Activated CD4-positive, alpha-beta T cell treated with anti-CD3 and anti-CD28 coated beads, Interleukin-2, amount 10 ng/mL, durations not matched to agents 24 days and 14 days (primary cell): ENCODE measurements at regions of chr3 and their contacts with region 1.

Region 1: DNA sequence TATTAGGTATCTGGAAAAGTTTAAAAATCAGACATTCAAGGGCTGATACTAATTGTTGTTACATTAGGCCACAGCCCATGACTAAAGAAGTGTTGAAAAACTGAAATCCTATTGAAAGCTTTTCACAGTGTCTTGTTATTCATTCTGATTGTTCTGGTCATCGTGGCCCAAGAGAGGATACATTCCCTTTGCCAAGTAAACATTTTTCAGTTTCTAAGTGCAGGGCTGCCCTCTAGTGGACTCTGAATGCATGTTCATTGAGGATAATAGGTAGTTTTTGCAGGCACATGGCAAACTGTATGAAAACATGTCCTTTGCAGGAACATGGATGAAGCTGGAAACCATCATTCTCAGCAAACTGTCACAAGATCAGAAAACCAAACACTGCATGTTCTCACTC is 181.1 kb downstream of the MYRIP start:
- DNase-seq: peak; percentile 70
- H3K4me3 Mint-ChIP-seq: no peak overlapping the region
- H3K27ac Mint-ChIP-seq: no peak overlapping the region
- H3K4me1 Mint-ChIP-seq: no peaks in the 10 kb centered on the region
- H3K27me3 Mint-ChIP-seq: no peaks in the 10 kb centered on the region

Region 2: GRCh38 chr3:39447637-39448483 is 542.7 kb before region 1 on chr3:
- intact Hi-C with region 1: loop called (anchors 5 kb)
- DNase-seq: peak; percentile 88
- H3K4me3 Mint-ChIP-seq: no peak overlapping the region
- H3K27ac Mint-ChIP-seq: no peak overlapping the region
- H3K4me1 Mint-ChIP-seq: no peaks in the 10 kb centered on the region
- H3K27me3 Mint-ChIP-seq: peaks cover 17% of the 10 kb centered on the region

Region 3: DNA sequence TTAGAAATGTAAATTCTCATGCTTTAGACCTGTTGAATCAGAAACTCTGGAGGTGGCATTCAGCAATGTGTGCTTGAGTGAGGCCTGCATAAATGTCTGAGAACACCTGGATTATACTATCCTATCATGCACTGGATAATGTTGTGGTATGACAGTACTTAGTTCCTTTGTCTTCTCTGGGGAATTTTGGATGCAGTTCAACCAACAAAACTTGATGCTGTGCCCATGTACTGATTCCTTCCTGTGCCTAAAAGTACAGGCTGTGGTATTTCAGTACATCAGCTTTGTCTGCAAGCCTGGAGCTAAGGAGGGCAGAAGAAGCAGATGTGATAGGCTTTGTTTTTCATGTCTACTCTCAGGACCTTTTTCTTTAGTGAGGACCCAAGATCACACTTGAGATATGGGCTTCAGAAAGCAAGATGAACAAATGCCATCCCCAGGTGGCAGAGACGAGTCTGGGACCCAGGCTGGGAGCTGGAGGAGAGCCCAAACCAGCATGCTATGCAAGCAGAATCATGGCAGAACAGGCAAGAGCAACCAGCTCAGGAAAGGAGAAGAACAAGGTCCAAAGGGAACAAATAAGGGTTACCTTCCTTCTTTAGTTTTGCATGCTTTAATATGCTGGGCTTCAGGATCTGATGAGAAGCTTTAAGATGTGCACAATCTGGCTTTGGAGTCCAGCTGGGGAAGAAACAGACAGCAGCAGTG is 56.4 kb before region 1 on chr3:
- intact Hi-C with region 1: no loop called
- DNase-seq: no peak
- H3K4me3 Mint-ChIP-seq: no peak overlapping the region
- H3K27ac Mint-ChIP-seq: no peak overlapping the region
- H3K4me1 Mint-ChIP-seq: no peaks in the 10 kb centered on the region
- H3K27me3 Mint-ChIP-seq: no peaks in the 10 kb centered on the region

Region 4: GRCh38 chr3:41158947-41159346 is 1168.4 kb after region 1 on chr3:
- intact Hi-C with region 1: no loop called
- DNase-seq: no peak
- H3K4me3 Mint-ChIP-seq: no peak overlapping the region
- H3K27ac Mint-ChIP-seq: no peak overlapping the region
- H3K4me1 Mint-ChIP-seq: peaks cover 13% of the 10 kb centered on the region
- H3K27me3 Mint-ChIP-seq: peaks cover 5% of the 10 kb centered on the region